ENCODE measurements at regions of chr12 and their contacts with region 1.

Region 1: GRCh38 chr12:14540801-14541462 is 26.8 kb downstream of the PLBD1 start:
- DNase-seq: no peak
- H3K4me3 ChIP-seq: no peak overlapping the region
- H3K27ac ChIP-seq: no peak overlapping the region
- H3K4me1 ChIP-seq: no peaks in the 10 kb centered on the region
- H3K27me3 ChIP-seq: no peaks in the 10 kb centered on the region
- CTCF ChIP-seq: no peak
- EP300 ChIP-seq: no peak
- POLR2A ChIP-seq: no peak

Region 2: GRCh38 chr12:14026537-14026936 is 514.4 kb before region 1 on chr12:
- intact Hi-C with region 1: loop called in 1 of 4 experiments (anchors 10 kb)
- DNase-seq: no peak
- H3K4me3 ChIP-seq: no peak overlapping the region
- H3K27ac ChIP-seq: no peak overlapping the region
- H3K4me1 ChIP-seq: no peaks in the 10 kb centered on the region
- H3K27me3 ChIP-seq: no peaks in the 10 kb centered on the region
- CTCF ChIP-seq: no peak
- EP300 ChIP-seq: no peak
- POLR2A ChIP-seq: no peak

Measured in ovary (tissue), 10 donors.